Activated CD8-positive, alpha-beta memory T cell treated with anti-CD3 and anti-CD28 coated beads, Interleukin-2, amount 10 ng/mL, durations not matched to agents 7 days and 5 days (primary cell): ENCODE measurements at regions of chr6 and their contacts with region 1.

Region 1: GRCh38 chr6:108848116-108848868 is at the start of gene ARMC2:
- DNase-seq: peak; percentile 93
- ATAC-seq: peak; percentile 95
- H3K4me3 Mint-ChIP-seq: peak within 1 kb of the TSS; percentile 84
- H3K27ac Mint-ChIP-seq: peak within 1 kb of the TSS; percentile 80
- H3K4me1 Mint-ChIP-seq: peaks cover 37% of the 10 kb centered on the region
- H3K27me3 Mint-ChIP-seq: no peaks in the 10 kb centered on the region
- total RNA-seq, gene ARMC2: 10.8 to 19.2 TPM

Region 2: DNA sequence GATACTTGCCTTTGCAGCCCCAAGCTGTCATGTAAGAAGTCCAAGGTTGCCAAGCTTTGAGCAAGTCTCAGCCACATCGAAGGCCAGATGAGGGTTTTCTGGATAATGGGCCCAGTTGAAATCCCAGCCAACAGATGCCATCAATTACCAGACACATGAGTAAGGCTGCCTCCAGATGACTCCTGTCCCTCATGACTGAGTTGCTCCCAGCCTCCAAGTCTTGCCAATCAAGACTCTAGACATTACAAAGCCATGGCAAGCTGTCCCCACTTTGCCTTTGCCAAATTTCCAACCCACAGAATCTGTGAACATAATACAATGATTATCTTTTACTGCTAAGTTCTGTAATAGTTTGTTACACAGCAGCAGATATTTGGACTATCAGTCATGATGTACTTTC is 76.9 kb before region 1 on chr6:
- CTCF ChIA-PET with region 1: no interaction called
- DNase-seq: no peak
- ATAC-seq: no peak
- H3K4me3 Mint-ChIP-seq: no peak overlapping the region
- H3K27ac Mint-ChIP-seq: no peak overlapping the region
- H3K4me1 Mint-ChIP-seq: peaks cover 10% of the 10 kb centered on the region
- H3K27me3 Mint-ChIP-seq: peaks cover 6% of the 10 kb centered on the region

Region 3: GRCh38 chr6:108835218-108835850 is 13.0 kb before region 1 on chr6:
- CTCF ChIA-PET with region 1: interaction called, 36 read pairs
- DNase-seq: peak; percentile 92
- ATAC-seq: peak; percentile 93
- H3K4me3 Mint-ChIP-seq: no peak overlapping the region
- H3K27ac Mint-ChIP-seq: peak overlapping the region; percentile 48
- H3K4me1 Mint-ChIP-seq: peaks cover 50% of the 10 kb centered on the region
- H3K27me3 Mint-ChIP-seq: no peaks in the 10 kb centered on the region

Region 4: GRCh38 chr6:108866798-108867197 is 18.5 kb after region 1 on chr6:
- CTCF ChIA-PET with region 1: interaction called, 10 read pairs
- DNase-seq: no peak
- ATAC-seq: no peak
- H3K4me3 Mint-ChIP-seq: no peak overlapping the region
- H3K27ac Mint-ChIP-seq: peak overlapping the region; percentile 91
- H3K4me1 Mint-ChIP-seq: peaks cover 64% of the 10 kb centered on the region
- H3K27me3 Mint-ChIP-seq: peaks cover 3% of the 10 kb centered on the region

Region 5: GRCh38 chr6:108883172-108883571 is 34.9 kb after region 1 on chr6:
- CTCF ChIA-PET with region 1: interaction called, 11 read pairs
- DNase-seq: no peak
- ATAC-seq: peak; percentile 92
- H3K4me3 Mint-ChIP-seq: peak overlapping the region; percentile 49
- H3K27ac Mint-ChIP-seq: peak overlapping the region; percentile 89
- H3K4me1 Mint-ChIP-seq: peaks cover 54% of the 10 kb centered on the region
- H3K27me3 Mint-ChIP-seq: peaks cover 13% of the 10 kb centered on the region

Region 6: DNA sequence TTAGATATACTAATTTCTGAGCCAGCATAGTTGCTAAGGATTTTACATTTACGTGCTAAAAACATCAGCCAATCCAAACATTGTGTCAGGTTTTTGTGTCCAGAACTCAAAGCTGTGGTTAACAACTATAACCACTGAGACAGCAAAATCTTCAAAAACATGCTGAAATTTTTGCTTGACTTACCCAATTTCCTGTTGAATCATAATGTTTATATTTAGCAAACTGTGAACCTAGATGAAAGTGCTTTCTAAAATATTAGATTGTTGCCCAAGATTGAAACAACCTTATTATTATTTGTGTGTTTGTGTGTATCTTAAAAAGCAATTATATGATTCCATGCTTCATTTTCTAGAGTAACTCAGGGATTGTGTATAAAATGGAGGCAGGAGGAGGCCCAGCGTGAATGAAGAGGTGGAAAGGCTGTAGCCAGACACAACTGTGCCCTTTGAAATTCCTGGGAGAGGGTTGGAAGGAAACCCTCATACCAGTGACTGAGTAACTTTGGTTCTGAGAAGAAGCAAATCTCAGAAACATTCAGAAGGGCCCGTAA is 47.9 kb after region 1 on chr6:
- CTCF ChIA-PET with region 1: interaction called, 22 read pairs
- DNase-seq: no peak
- ATAC-seq: peak; percentile 71
- H3K4me3 Mint-ChIP-seq: peak overlapping the region; percentile 37
- H3K27ac Mint-ChIP-seq: peak overlapping the region; percentile 95
- H3K4me1 Mint-ChIP-seq: peaks cover 52% of the 10 kb centered on the region
- H3K27me3 Mint-ChIP-seq: peaks cover 5% of the 10 kb centered on the region

Region 7: DNA sequence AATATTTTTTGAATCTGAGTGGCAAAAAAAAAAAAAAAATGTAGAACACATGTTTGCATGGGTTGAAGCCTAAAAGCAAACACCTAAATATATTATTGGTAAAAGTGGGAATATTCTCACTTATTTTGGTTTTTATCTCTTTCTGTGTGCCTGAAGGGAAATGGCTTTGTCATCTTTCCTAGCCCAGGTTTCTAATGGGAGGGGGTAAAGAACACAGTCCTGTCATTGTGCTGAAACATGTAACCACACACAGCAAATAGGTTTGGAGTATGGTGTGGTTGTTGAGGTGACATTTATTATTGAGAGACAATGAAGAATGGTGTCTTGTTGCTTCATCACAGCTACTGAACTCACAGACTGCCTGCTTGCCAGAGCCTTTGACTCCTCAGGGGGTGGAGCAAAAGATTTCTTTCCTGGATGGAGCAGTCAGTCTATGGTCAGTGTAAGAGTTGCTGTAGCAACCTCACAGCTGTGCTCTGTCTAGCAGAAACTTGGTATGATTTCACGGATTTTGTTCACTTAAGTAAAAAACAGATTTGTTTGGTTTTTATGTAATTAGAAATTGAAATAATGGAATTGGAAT is 317.2 kb after region 1 on chr6:
- CTCF ChIA-PET with region 1: no interaction called
- DNase-seq: no peak
- ATAC-seq: no peak
- H3K4me3 Mint-ChIP-seq: no peak overlapping the region
- H3K27ac Mint-ChIP-seq: no peak overlapping the region
- H3K4me1 Mint-ChIP-seq: peaks cover 2% of the 10 kb centered on the region
- H3K27me3 Mint-ChIP-seq: no peaks in the 10 kb centered on the region